PC-9 (cell line): ENCODE measurements at regions of chr2 and their contacts with region 1.

Region 1: DNA sequence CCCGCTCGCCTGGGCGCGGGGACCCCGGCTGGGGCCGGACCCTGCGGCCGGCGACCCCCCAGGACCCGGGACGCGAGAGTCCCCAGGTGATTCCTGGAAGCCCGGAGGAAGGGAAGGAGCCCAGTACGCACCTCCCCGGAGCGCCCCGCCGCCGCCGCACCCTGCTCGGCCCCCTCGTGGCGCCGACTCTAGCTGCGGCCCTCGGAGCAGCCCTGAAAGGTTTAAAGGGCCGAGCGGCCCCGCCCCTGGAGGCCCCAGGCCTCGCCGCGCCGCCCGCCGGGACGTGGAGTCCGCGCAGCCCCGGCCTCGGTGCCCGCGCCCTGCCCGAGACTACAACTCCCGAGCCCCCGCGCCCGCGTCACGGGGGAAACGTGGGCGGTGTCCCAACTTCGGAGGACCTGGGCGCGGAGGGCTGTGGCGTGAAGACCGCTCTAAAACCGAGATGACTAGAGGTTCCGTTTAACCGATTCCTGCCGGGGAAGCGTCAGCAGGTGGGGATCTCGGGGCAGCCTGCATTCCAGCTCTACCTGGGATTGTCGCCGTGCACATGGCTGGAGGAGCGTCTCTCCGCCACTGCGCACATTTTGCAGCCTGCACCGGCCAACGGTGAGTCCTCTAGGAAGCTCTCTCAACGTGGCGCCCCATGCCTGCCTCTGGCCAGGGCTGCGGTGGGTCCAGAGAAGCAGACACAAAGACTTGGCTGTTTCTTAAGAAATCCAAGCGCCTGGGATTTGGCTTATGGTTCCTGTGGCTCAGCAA is at the start of gene TMEM150A:
- DNase-seq: peak; percentile 67 to 90
- H3K4me3 ChIP-seq: peak within 1 kb of the TSS; percentile 59
- H3K27ac ChIP-seq: peak within 1 kb of the TSS; percentile 99
- H3K4me1 ChIP-seq: peaks cover 45% of the 10 kb centered on the region
- H3K27me3 ChIP-seq: no peaks in the 10 kb centered on the region
- CTCF ChIP-seq: no peak; the same call in 1 of the 2 replicates
- total RNA-seq, gene TMEM150A: 5.3 and 5.9 TPM in 2 replicates

Region 2: GRCh38 chr2:85354286-85355072 is 248.2 kb before region 1 on chr2 and contains the starts of genes ELMOD3 and RETSAT:
- CTCF ChIA-PET with region 1: no interaction called
- POLR2A ChIA-PET with region 1: interaction called, 12 read pairs
- intact Hi-C with region 1: no loop called
- DNase-seq: peak; percentile 96
- H3K4me3 ChIP-seq: peak within 1 kb of the TSS; percentile 87
- H3K27ac ChIP-seq: peak within 1 kb of the TSS; percentile 62
- H3K4me1 ChIP-seq: peaks cover 16% of the 10 kb centered on the region
- H3K27me3 ChIP-seq: no peaks in the 10 kb centered on the region
- CTCF ChIP-seq: no peak
- total RNA-seq, gene ELMOD3: 16.4 and 18.1 TPM in 2 replicates
- total RNA-seq, gene RETSAT: 52.1 and 57.8 TPM in 2 replicates

Region 3: DNA sequence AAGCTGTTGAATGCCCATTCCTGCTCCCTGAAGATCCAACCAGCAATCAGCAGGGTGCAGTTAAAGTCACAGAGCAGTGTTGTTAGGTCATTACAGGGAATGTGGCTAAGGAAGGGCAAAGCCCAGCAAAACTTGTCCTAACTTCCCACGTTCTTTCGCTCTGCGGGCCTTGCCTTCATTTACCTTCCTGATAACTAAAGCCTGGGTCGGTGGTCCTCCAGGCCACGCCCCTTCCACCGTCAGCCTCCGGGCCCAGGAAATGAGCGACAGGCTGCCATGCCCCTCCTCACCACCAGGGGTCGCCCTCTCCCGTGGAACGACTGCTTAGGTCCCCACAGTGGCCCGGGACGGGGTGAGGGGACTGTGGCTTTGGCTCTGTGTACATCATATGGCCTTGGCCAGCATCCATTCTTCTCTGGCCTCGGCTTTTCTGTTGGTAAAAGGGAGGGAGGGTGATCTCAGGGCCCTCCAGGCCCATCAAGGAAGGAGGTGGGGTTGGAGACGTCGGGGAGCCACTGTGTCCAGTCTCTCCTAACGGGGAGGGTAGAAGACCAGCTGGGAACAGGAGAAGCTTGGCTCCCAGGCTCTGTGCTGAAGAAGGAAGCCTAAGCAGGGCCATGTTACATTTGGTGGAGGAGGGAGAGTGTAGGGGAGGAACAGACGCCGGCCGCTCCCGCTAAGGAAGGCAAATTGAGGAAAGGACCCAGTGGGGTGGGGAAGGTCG is 182.0 kb before region 1 on chr2:
- CTCF ChIA-PET with region 1: no interaction called
- POLR2A ChIA-PET with region 1: no interaction called
- intact Hi-C with region 1: loop called (anchors 2 kb)
- DNase-seq: peak; percentile 57 to 82
- H3K4me3 ChIP-seq: no peak overlapping the region; the same call in 1 of the 2 replicates
- H3K27ac ChIP-seq: peak overlapping the region; percentile 65
- H3K4me1 ChIP-seq: peaks cover 46% of the 10 kb centered on the region
- H3K27me3 ChIP-seq: no peaks in the 10 kb centered on the region
- CTCF ChIP-seq: peak; percentile 100

Region 4: DNA sequence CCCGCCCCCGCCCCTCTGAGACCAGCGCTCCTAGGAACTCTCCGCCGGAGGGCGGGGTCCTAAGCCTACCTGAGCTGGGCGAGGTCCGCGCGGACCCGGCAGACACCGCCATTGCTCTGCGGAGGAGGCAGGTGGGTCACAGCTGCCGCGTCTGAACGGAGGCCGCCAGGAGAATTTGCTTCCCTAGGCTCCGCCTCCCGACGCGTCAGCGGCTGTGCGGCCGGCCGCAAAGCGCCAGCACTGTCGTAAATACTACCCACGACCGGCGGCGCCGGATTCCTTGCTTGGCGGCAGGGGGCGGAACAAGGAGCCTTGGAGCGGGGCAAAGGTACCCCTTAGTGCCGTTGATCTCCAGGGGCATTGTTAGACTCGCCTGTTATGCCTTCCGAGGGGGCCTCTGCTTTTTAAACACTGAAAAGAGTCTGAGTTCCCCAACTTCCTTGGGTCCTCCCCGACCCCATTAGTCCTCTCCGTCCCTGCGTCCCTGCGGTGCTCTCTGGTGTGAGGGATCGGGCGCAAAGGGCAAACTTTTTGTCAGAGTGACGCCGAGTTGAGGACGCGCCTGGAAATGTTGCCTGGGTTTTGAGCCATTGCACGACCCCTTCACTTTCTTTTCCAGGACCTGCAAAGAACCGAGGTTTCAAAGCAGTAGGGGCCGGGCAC is 41.2 kb before region 1 on chr2 and contains the start of gene GGCX:
- CTCF ChIA-PET with region 1: no interaction called
- POLR2A ChIA-PET with region 1: interaction called, 13 read pairs
- intact Hi-C with region 1: loop called (anchors 5 kb)
- DNase-seq: peak; percentile 86 to 89
- H3K4me3 ChIP-seq: peak within 1 kb of the TSS; percentile 73
- H3K27ac ChIP-seq: peak within 1 kb of the TSS; percentile 65
- H3K4me1 ChIP-seq: peaks cover 15% of the 10 kb centered on the region
- H3K27me3 ChIP-seq: no peaks in the 10 kb centered on the region
- CTCF ChIP-seq: peak; percentile 49; the same call in 1 of the 2 replicates
- total RNA-seq, gene GGCX: 30.2 and 30.6 TPM in 2 replicates

Region 5: GRCh38 chr2:85577386-85578242 is 25.0 kb before region 1 on chr2 and contains the start of gene VAMP8:
- CTCF ChIA-PET with region 1: no interaction called
- POLR2A ChIA-PET with region 1: no interaction called
- intact Hi-C with region 1: loop called (anchors 2 kb)
- DNase-seq: peak; percentile 79 to 83
- H3K4me3 ChIP-seq: peak within 1 kb of the TSS; percentile 60
- H3K27ac ChIP-seq: peak within 1 kb of the TSS; percentile 64
- H3K4me1 ChIP-seq: peaks cover 22% of the 10 kb centered on the region
- H3K27me3 ChIP-seq: no peaks in the 10 kb centered on the region
- CTCF ChIP-seq: no peak
- total RNA-seq, gene VAMP8: 91.9 and 124 TPM in 2 replicates

Region 6: DNA sequence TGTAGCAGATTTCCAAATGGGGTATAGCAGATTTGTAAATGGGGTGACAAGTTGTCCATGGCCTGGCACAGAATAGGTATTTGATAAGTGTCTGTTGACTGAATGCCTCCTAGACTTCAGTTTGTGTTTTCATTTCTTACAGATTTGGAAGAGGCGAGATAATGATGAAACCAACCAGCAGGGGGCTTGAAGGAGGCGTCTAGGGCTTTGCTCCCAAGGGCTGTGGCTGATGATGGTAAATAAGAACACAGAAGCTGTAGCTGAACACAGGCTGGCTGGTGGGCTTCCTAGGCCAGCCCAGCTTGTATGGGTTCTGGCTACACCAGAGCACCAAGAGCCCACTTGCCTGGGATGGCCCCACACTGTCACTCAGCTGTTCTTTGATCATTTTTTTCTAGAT is 46.0 kb after region 1 on chr2:
- CTCF ChIA-PET with region 1: no interaction called
- POLR2A ChIA-PET with region 1: no interaction called
- intact Hi-C with region 1: no loop called
- DNase-seq: peak in 1 of 2 experiments; percentile 36
- H3K4me3 ChIP-seq: no peak overlapping the region
- H3K27ac ChIP-seq: peak overlapping the region; percentile 72
- H3K4me1 ChIP-seq: peaks cover 27% of the 10 kb centered on the region
- H3K27me3 ChIP-seq: no peaks in the 10 kb centered on the region
- CTCF ChIP-seq: peak; percentile 67

Region 7: GRCh38 chr2:85804583-85804982 is 201.9 kb after region 1 on chr2:
- CTCF ChIA-PET with region 1: interaction called, 11 read pairs
- POLR2A ChIA-PET with region 1: no interaction called
- intact Hi-C with region 1: no loop called
- DNase-seq: no peak
- H3K4me3 ChIP-seq: no peak overlapping the region
- H3K27ac ChIP-seq: no peak overlapping the region
- H3K4me1 ChIP-seq: peaks cover 6% of the 10 kb centered on the region
- H3K27me3 ChIP-seq: no peaks in the 10 kb centered on the region
- CTCF ChIP-seq: peak; percentile 78